Right ventricle myocardium superior (tissue), 1 donor: ENCODE measurements at regions of chr9 and their contacts with region 1.

Region 1: GRCh38 chr9:37903647-37904444 is at the start of gene SLC25A51:
- DNase-seq: peak; percentile 96
- ATAC-seq: peak; percentile 97
- total RNA-seq, gene SLC25A51: 20.0 TPM

Region 2: DNA sequence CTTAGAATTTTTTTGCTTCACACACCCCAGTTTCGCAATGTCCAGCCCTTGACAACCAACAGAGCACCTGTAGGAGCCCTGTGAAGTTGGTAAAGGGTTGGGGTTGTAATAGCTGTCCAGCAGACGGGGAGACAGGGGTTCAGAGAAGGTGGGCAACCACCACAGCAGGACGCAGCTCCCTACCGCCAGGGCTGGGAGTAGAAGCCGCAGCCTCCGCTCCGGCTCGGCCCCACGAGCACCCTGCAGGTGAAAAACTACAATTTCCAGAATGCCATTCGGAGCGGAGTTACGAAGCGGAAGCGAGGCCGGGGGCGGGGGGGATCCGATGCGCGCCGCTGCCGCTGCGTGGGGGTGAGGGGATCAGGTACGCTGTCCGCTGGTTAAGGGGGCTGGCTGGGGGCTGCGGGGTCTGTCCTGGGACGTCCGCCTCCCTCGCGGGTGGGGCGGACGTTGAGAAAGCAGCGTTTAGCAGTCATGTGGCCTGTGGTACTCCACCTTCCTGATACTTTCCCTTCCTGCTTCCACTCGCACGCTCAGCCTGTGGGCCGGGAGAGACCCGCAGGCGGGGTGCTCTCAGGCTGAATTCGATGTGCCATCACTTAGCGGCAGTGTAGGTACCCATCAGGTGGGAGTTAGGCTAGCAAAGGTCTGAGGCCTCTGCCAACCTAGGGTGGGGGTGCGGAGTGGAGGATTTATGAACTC is 150.2 kb before region 1 on chr9 and contains the start of gene TRMT10B:
- intact Hi-C with region 1: loop called (anchors 10 kb)
- DNase-seq: peak; percentile 82
- ATAC-seq: peak; percentile 98
- total RNA-seq, gene TRMT10B: 3.7 TPM

Region 3: DNA sequence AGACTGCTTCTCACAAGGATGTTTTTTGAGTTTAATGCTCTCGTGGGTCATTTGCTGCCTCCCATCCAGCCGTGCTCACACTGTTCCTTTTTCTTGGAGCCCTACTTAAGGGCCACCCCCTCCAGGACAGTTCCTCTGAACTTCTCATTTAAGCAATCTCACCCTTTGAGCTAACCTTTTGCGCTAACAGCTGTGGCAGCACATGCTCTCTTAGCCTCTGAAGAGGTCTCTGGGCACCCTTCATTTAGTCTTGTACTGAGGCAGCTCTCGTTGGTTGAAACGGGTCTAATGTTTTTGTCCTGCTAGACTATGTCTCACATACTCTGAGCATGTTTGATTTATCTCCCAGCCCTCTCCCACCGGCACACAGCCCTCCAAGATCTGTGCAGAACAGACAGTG is 500.5 kb after region 1 on chr9:
- intact Hi-C with region 1: loop called (anchors 5 kb)
- DNase-seq: no peak
- ATAC-seq: no peak